Transverse colon (tissue), 4 donors: ENCODE measurements at regions of chr16 and their contacts with region 1.

Region 1: GRCh38 chr16:13289515-13289914 is 388.1 kb downstream of the SHISA9 start:
- DNase-seq: no peak
- H3K4me3 ChIP-seq: no peak overlapping the region
- H3K27ac ChIP-seq: no peak overlapping the region
- H3K4me1 ChIP-seq: no peaks in the 10 kb centered on the region
- H3K27me3 ChIP-seq: no peaks in the 10 kb centered on the region
- CTCF ChIP-seq: no peak
- EP300 ChIP-seq: no peak
- POLR2A ChIP-seq: no peak

Region 2: GRCh38 chr16:13206606-13207005 is 82.9 kb before region 1 on chr16:
- in situ Hi-C with region 1: no loop called
- intact Hi-C with region 1: loop called (anchors 5 kb)
- DNase-seq: no peak
- H3K4me3 ChIP-seq: no peak overlapping the region
- H3K27ac ChIP-seq: no peak overlapping the region
- H3K4me1 ChIP-seq: no peaks in the 10 kb centered on the region
- H3K27me3 ChIP-seq: no peaks in the 10 kb centered on the region
- CTCF ChIP-seq: no peak
- EP300 ChIP-seq: no peak
- POLR2A ChIP-seq: no peak

Region 3: DNA sequence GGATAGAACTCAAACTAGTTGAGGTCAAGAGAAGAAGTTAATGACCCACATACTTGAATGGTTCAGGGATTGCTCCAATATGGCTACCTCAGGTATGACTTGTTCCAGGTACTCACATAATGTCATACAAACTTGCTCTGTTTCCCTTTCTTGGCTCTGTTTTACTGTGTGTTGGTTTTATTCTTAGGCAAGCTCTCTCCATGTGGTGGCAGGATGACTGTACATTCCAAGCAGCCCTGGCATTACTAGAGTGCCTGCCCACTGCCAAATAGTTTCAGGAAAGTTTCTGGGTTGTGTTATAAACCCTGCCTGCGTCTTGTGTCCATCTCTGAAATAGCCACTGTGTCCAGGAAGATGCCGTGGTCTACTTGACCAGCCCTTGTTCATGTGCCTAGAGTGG is 88.6 kb after region 1 on chr16:
- in situ Hi-C with region 1: no loop called
- intact Hi-C with region 1: no loop called
- DNase-seq: no peak
- H3K4me3 ChIP-seq: no peak overlapping the region
- H3K27ac ChIP-seq: no peak overlapping the region
- H3K4me1 ChIP-seq: no peaks in the 10 kb centered on the region
- H3K27me3 ChIP-seq: no peaks in the 10 kb centered on the region
- CTCF ChIP-seq: no peak
- EP300 ChIP-seq: no peak
- POLR2A ChIP-seq: no peak

Region 4: DNA sequence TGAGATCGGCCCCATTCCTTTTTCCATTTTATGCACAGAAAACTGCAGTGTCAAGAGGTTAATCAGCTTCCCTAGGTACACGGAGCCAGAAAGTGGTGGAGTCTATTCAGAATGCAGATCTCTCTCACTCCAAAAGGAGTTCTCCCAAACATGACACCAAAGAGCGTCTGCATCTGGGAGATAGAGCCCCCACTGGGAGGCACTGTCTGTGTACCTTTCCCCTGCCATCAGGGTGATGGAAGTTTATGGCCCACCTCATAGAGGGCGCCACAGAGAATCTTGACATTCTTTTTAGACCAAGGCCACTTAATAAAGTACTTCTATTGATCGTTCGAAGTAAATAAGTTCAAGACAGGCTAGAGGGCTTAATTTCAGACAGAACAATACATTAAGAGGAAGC is 136.8 kb after region 1 on chr16:
- in situ Hi-C with region 1: no loop called
- intact Hi-C with region 1: no loop called
- DNase-seq: no peak
- H3K4me3 ChIP-seq: no peak overlapping the region
- H3K27ac ChIP-seq: no peak overlapping the region
- H3K4me1 ChIP-seq: no peaks in the 10 kb centered on the region
- H3K27me3 ChIP-seq: no peaks in the 10 kb centered on the region
- CTCF ChIP-seq: no peak
- EP300 ChIP-seq: no peak
- POLR2A ChIP-seq: no peak